Ascending aorta (tissue), 2 donors: ENCODE measurements at regions of chr13 and their contacts with region 1.

Region 1: GRCh38 chr13:102773441-102774215 is at the start of gene TEX30:
- DNase-seq: peak; percentile 38 to 91
- H3K4me3 ChIP-seq: peak within 1 kb of the TSS; percentile 68 to 84
- H3K27ac ChIP-seq: peak within 1 kb of the TSS; percentile 82 to 87
- H3K4me1 ChIP-seq: peaks cover 4 to 9% of the 10 kb centered on the region in 2 donors
- H3K27me3 ChIP-seq: no peaks in the 10 kb centered on the region
- CTCF ChIP-seq: peak in 1 of 3 experiments; percentile 10
- total RNA-seq, gene TEX30: 1.4 TPM

Region 2: GRCh38 chr13:102800145-102801041 is 26.8 kb after region 1 on chr13:
- intact Hi-C with region 1: loop called (anchors 1 kb)
- DNase-seq: peak; percentile 27 to 87
- H3K4me3 ChIP-seq: peak overlapping the region; percentile 86 to 89
- H3K27ac ChIP-seq: peak overlapping the region; percentile 86
- H3K4me1 ChIP-seq: peaks cover 7% of the 10 kb centered on the region in 2 donors
- H3K27me3 ChIP-seq: no peaks in the 10 kb centered on the region
- CTCF ChIP-seq: peak; percentile 54 to 74 (median 62)

Region 3: DNA sequence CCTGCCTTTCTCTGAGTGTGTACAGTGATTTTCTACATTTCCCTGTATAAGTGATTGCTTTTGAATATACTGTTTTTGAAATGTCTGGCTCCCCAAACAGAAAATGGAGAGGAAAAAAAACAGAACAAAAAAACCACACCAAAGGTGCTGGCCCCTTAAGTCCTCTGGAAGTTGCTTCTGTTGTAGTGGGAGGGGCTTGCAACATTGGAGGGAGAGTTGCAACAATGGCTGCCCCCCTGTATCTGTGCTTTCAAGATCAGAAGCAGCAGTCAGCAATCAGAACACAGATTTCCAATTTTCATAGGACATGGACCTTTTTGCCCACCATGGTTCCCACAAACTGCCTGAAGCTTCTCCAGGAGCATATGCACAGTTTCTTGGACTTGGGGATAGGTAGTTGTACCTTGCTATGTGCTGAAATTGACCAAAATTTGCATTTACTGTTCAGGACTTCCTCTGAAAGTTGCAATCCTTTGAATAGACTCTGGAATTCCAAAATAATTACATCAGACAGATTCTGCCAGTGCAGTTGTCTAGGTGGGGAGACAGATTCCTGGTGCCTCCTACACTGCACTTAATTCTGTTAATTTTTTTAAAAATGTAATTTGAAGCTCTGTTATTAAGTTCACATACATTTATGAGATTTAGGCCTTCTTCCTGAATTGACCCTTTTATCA is 39.1 kb after region 1 on chr13:
- intact Hi-C with region 1: no loop called
- DNase-seq: no peak
- H3K4me3 ChIP-seq: no peak overlapping the region
- H3K27ac ChIP-seq: no peak overlapping the region
- H3K4me1 ChIP-seq: no peaks in the 10 kb centered on the region
- H3K27me3 ChIP-seq: no peaks in the 10 kb centered on the region
- CTCF ChIP-seq: no peak

Region 4: GRCh38 chr13:102845630-102846260 is 72.1 kb after region 1 on chr13 and contains the start of gene ERCC5:
- intact Hi-C with region 1: loop called (anchors 2 kb)
- DNase-seq: peak; percentile 74 to 96
- H3K4me3 ChIP-seq: peak within 1 kb of the TSS; percentile 69 to 91
- H3K27ac ChIP-seq: peak within 1 kb of the TSS; percentile 95
- H3K4me1 ChIP-seq: peaks cover 0 to 4% of the 10 kb centered on the region in 2 donors
- H3K27me3 ChIP-seq: no peaks in the 10 kb centered on the region
- CTCF ChIP-seq: no peak
- total RNA-seq, gene ERCC5: 26.2 TPM

Region 5: DNA sequence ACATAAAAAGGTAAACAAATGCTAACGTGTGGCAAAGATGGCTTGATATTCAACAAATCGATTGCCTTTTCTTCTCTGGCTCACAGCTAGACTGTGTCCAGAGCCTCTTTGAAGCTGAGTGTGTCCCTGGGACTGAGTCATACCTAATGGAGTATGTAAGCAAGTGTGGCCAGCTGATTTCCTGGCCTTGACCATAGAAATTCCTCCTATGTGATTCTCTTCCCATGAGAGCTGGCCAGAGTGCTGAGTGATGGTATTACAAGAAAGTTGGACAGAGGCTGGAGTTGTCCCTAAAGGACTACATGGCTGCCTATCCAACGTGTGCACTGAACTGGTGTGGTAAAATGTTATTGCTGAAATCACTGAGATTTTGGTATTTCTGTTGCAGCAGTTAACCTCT is 612.7 kb after region 1 on chr13:
- intact Hi-C with region 1: no loop called
- DNase-seq: no peak
- H3K4me3 ChIP-seq: no peak overlapping the region
- H3K27ac ChIP-seq: no peak overlapping the region
- H3K4me1 ChIP-seq: no peaks in the 10 kb centered on the region
- H3K27me3 ChIP-seq: no peaks in the 10 kb centered on the region
- CTCF ChIP-seq: no peak